Heart right ventricle (tissue), 16 donors: ENCODE measurements at regions of chr20 and their contacts with region 1.

Region 1: DNA sequence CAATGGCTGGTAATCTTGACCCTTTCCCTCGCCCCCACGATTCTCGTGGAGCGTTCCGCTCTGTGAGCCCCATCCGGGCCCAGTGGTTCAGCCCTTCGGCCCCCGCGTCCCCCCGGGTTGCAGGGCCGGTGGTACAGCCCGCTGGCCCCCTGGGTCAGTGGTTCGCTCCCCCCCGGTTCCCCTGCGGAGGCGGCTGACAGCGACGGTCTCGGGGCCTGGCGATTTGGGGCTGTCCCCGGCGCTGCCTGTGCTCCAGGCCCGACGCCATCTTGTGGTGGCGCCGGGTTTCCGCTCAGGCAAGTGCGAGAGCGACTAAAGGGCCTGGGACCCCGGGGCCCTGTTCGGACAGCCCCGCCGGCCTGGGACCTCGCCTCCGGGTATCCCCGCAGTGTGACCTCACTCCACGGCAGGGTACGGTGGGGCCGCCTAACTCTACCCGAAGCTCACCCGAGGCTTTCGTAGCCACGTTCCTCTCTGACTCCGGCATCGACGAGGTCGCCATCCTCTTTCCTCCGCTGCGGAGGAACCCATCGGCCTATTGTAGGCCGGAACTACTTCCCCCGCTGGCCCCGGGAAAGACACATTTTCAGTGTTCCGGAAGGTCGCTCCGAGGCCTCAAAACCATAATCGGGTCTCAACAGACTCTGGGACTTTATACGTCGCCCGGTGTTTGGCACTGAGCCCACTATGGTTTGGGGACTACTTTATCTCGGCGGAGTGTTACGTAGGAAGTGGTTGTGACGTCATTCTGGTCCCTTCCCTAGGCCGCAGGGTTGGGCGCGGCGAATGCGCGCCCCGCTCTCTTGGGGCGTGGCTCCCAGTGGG is at the start of gene ZNF335:
- DNase-seq: peak; percentile 96
- ATAC-seq: peak; percentile 93 to 98 (median 96)
- H3K4me3 ChIP-seq: peak within 1 kb of the TSS; percentile 63 to 99 (median 88)
- H3K27ac ChIP-seq: peak within 1 kb of the TSS; percentile 96 to 100 (median 99)
- H3K4me1 ChIP-seq: peaks cover 0 to 39% (median 22%) of the 10 kb centered on the region in 9 donors
- H3K27me3 ChIP-seq: no peaks in the 10 kb centered on the region
- CTCF ChIP-seq: peak in 8 of 9 donors; percentile 40 to 67 (median 50)
- total RNA-seq, gene ZNF335: 6.1 to 11.6 (median 7.3) TPM

Region 2: GRCh38 chr20:45798935-45799642 is 172.8 kb before region 1 on chr20:
- intact Hi-C with region 1: loop called in 1 of 10 experiments (anchors 10 kb)
- DNase-seq: peak in 1 of 2 donors; percentile 61
- ATAC-seq: peak; percentile 55 to 86 (median 70)
- H3K4me3 ChIP-seq: no peak overlapping the region
- H3K27ac ChIP-seq: peak overlapping the region in 1 of 10 donors; percentile 6
- H3K4me1 ChIP-seq: peaks cover 0 to 27% (median 4%) of the 10 kb centered on the region in 9 donors
- H3K27me3 ChIP-seq: no peaks in the 10 kb centered on the region
- CTCF ChIP-seq: peak; percentile 48 to 82 (median 71)

Region 3: DNA sequence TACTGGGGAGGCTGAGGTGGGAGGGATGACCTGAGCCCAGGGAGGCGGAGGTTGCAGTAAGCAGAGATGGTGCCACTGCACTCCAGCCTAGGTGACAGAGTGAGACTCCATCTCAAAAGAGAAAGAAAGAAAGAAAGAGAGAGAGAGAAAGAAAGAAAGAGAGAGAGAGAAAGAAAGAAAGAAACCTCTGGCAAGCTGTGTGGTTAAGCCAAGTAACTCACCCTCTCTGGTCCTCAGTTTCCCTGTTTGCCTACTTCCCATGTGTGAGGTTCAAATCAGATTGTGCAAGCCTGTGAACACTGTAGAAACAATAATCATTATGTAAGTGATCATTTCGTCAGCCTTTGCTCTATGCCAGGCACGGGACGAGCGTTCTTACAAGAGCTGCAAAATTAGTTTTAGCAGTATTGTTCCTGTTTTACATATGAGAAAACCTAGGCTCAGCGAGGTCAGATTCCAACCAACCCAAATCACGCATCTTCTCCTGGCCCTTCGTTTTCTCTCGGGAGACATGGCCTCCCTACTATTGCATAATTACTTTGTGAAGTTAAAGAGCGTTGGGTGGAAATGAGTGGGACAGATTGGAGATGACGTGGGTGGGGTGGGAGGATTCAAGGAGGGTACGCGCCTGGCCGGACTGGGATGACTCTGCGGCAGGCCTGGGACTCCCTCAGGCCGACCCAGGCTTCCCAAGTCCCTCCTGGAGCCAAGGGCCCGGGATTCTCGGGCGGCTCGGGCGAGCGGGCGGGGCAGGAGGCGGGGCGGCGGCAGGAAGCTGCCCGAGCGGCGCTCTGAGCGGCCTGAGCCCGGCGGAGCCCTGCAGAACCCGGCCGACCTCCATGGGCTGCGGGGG is 138.6 kb before region 1 on chr20 and contains the start of gene SNX21:
- intact Hi-C with region 1: loop called in 6 of 10 experiments (anchors 10 kb)
- DNase-seq: peak; percentile 89 to 92
- ATAC-seq: peak; percentile 88 to 92 (median 89)
- H3K4me3 ChIP-seq: peak within 1 kb of the TSS; percentile 49 to 90 (median 75)
- H3K27ac ChIP-seq: peak within 1 kb of the TSS; percentile 78 to 99 (median 95)
- H3K4me1 ChIP-seq: peaks cover 7 to 59% (median 39%) of the 10 kb centered on the region in 9 donors
- H3K27me3 ChIP-seq: no peaks in the 10 kb centered on the region
- CTCF ChIP-seq: no peak
- total RNA-seq, gene SNX21: 15.4 to 27.0 (median 19.3) TPM

Region 4: GRCh38 chr20:45890985-45891983 is 80.6 kb before region 1 on chr20 and contains the starts of genes CTSA and NEURL2:
- intact Hi-C with region 1: loop called in 4 of 10 experiments (anchors 2 to 10 kb)
- DNase-seq: peak; percentile 94 to 95
- ATAC-seq: peak; percentile 88 to 96 (median 92)
- H3K4me3 ChIP-seq: peak within 1 kb of the TSS; percentile 69 to 88 (median 74)
- H3K27ac ChIP-seq: peak within 1 kb of the TSS; percentile 78 to 97 (median 92)
- H3K4me1 ChIP-seq: peaks cover 10 to 47% (median 30%) of the 10 kb centered on the region in 9 donors
- H3K27me3 ChIP-seq: no peaks in the 10 kb centered on the region
- CTCF ChIP-seq: peak in 2 of 9 donors; percentile 11 to 21
- total RNA-seq, gene CTSA: 75.1 to 173 (median 112) TPM
- total RNA-seq, gene NEURL2: 6.2 to 11.1 (median 8.3) TPM

Region 5: DNA sequence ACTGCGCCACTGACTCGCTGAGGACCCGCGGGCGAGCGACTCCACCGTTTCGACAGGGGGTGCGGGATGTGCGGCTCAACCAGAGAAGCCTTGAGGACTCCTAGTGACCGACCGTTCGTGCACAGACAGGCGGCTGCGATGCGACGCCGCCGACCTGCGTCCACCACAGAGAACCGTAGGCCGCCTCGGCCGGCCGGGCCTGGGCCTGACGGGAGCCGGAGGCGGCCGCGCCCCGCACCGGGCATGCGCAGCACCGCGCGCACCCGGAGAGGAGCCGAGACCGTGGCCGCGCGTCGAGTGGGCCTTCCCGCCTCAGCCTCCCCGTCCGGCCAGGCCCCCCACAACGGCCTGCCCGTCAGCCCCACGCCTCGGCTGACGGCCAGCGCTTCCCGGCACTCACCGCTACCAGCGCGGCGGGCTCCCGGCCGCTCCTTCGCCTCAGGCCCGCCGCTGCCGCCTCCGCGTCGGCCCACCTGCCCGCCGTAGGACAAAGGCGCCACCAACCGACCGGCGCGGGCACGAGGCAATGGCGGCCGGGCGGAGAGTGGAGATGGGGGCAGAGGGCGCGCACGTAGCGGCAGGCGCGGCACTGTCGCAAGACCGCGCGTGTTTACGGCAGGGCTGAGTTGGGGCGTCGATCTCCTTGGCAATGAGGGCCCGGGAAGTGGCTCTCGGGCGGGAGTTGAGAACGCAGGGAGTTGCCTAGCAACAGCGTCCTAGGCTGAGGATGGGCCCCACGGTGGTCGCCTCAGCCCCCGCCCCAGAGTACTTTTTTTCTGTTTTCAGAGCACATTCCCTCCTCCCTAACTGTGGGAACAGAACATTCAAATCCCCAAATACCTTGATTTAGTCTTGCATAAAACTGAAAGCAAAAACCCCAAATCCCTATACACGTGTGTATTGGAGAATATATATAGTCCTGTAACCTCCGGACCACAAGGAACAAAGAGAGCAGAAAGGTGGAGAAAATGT is 117.8 kb after region 1 on chr20 and contains the start of gene NCOA5:
- intact Hi-C with region 1: loop called in 2 of 10 experiments (anchors 5 to 10 kb)
- DNase-seq: peak; percentile 96 to 97
- ATAC-seq: peak; percentile 95 to 99 (median 98)
- H3K4me3 ChIP-seq: peak within 1 kb of the TSS; percentile 70 to 95 (median 89)
- H3K27ac ChIP-seq: peak within 1 kb of the TSS; percentile 94 to 100 (median 98)
- H3K4me1 ChIP-seq: peaks cover 4 to 53% (median 46%) of the 10 kb centered on the region in 9 donors
- H3K27me3 ChIP-seq: no peaks in the 10 kb centered on the region
- CTCF ChIP-seq: peak in 6 of 9 donors; percentile 33 to 60 (median 50)
- total RNA-seq, gene NCOA5: 10.3 to 22.5 (median 11.6) TPM

Region 6: DNA sequence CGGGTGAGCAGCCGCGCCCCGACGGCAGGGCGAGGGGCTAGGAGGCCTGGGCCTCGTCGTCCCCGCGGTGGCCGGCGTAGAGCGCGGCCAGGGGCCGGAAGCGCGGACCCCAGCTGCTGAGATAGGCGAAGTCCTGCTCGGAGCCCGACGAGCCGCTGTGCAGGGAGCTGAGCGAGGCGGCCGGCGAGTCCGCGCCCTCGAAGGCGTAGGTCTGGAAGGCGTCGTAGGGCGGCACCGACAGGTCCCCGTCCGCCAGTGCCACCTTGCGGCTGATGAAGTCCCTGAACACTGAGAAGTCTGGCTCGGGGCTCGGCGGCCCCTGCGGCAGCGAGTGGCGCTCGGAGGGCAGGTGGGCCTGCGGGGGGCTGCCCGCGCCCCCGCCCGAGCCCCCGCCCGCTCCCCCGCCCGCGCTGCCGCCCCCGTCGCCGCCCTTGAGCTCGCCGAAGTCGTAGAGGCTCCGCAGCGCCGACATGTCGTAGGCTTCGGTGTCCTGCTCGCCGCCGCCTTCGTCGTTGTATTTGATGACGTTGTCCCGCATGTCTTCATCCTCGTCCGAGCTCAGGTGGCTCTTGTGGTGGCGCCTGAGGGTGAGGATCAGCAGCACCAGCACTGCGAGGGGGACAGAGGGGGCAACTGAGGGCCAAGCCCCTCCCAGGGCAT is 202.7 kb after region 1 on chr20:
- intact Hi-C with region 1: no loop called
- DNase-seq: peak; percentile 64 to 77
- ATAC-seq: peak; percentile 56 to 82 (median 76)
- H3K4me3 ChIP-seq: no peak overlapping the region
- H3K27ac ChIP-seq: no peak overlapping the region
- H3K4me1 ChIP-seq: peaks cover 0 to 12% (median 0%) of the 10 kb centered on the region in 9 donors
- H3K27me3 ChIP-seq: peaks cover 12 to 75% (median 61%) of the 10 kb centered on the region in 7 donors
- CTCF ChIP-seq: peak; percentile 37 to 75 (median 63)